ENCODE measurements at regions of chr1 and their contacts with region 1.

Region 1: DNA sequence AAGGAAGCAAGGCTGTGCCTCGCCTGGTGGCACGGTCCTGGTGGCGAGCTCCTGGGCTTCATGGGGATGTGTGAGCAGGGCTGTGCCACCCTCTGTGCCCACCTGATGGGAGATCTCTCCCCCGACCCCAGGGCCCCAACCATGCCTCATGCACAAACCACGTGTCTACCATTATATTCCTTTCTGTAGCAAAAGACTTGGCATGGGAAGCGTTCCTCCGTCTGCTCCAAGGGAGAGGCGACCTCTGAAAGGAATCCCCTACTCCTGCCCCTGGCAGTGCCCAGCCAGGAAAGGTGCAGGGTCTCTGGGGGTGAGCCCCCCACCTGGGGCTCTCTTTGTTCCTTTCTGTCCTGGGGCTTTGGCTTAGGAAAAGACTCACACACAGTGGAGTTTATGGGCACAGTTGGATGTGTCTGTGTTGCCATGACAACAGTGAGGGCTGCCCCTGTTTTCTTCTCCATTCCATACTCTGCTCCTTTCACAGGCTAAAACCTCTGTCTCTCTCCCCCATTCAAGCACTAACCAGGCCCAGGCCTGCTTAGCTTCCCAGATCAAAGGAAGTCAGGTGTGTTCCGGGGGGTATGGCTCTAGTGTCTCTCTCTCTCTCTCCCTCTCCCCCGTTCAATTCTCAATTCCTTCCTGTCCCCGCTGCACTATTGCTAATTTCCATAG is 21.4 kb upstream of the LRRN2 start:
- DNase-seq: no peak
- ATAC-seq: no peak
- H3K4me3 ChIP-seq: no peak overlapping the region
- H3K27ac ChIP-seq: no peak overlapping the region
- H3K4me1 ChIP-seq: peaks cover 14% of the 10 kb centered on the region
- H3K27me3 ChIP-seq: no peaks in the 10 kb centered on the region
- CTCF ChIP-seq: no peak

Region 2: DNA sequence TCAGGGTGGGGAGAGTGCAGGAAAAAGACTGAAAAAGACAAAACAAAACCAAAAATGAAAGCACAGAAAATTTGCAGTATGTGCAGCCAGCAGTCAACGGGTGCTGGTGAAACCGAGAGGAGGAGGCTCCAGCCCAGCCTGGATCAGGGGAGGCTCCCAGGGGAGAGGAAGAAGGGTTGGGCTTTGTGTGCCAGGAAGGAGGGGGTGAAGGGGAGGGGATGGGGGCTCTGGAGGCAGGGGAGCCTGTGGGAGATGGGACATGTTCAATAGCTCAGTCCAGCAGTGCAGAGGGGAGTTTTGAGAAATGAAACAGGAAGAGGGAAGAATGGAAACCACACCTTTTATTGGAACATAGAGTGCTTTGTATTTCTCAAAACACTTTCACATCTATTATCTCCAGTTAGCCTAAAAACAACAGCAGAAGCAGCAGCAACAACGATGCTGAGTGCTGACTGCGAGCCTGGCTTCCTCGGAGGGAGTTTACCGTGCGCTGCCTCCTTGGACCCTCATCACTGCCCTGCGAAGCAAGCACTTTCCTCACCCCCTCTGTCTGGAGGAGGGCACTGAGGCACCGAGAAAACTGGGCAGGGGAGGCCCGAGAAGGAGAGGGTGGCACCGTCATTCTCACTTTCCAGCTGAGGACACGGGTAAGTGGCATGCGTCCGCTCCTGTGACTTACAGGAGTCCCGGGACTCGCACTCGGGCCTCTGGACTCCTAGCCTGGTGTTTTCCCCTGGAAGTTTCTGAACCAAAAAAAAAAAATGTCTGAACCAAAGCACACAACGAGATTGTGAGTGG is 127.9 kb before region 1 on chr1:
- CTCF ChIA-PET with region 1: no interaction called
- POLR2A ChIA-PET with region 1: no interaction called
- intact Hi-C with region 1: loop called (anchors 10 kb)
- DNase-seq: no peak
- ATAC-seq: no peak
- H3K4me3 ChIP-seq: no peak overlapping the region
- H3K27ac ChIP-seq: no peak overlapping the region
- H3K4me1 ChIP-seq: peaks cover 20% of the 10 kb centered on the region
- H3K27me3 ChIP-seq: no peaks in the 10 kb centered on the region
- CTCF ChIP-seq: no peak

Region 3: GRCh38 chr1:205111354-205111753 is 404.4 kb after region 1 on chr1:
- CTCF ChIA-PET with region 1: no interaction called
- POLR2A ChIA-PET with region 1: no interaction called
- intact Hi-C with region 1: no loop called
- DNase-seq: no peak
- ATAC-seq: no peak
- H3K4me3 ChIP-seq: no peak overlapping the region
- H3K27ac ChIP-seq: no peak overlapping the region
- H3K4me1 ChIP-seq: no peaks in the 10 kb centered on the region
- H3K27me3 ChIP-seq: no peaks in the 10 kb centered on the region
- CTCF ChIP-seq: no peak

Measured in PC-3 (cell line).